ENCODE measurements at regions of chr2 and their contacts with region 1.

Region 1: GRCh38 chr2:173934895-173935294 is 30.3 kb downstream of the SP3 start:
- DNase-seq: no peak
- H3K4me3 ChIP-seq: no peak overlapping the region
- H3K27ac ChIP-seq: no peak overlapping the region
- H3K4me1 ChIP-seq: peaks cover 8% of the 10 kb centered on the region
- H3K27me3 ChIP-seq: no peaks in the 10 kb centered on the region
- CTCF ChIP-seq: no peak

Region 2: GRCh38 chr2:173872711-173873412 is 62.0 kb before region 1 on chr2:
- CTCF ChIA-PET with region 1: no interaction called
- POLR2A ChIA-PET with region 1: no interaction called
- intact Hi-C with region 1: no loop called
- DNase-seq: no peak
- H3K4me3 ChIP-seq: no peak overlapping the region
- H3K27ac ChIP-seq: no peak overlapping the region
- H3K4me1 ChIP-seq: no peaks in the 10 kb centered on the region
- H3K27me3 ChIP-seq: no peaks in the 10 kb centered on the region
- CTCF ChIP-seq: no peak

Region 3: DNA sequence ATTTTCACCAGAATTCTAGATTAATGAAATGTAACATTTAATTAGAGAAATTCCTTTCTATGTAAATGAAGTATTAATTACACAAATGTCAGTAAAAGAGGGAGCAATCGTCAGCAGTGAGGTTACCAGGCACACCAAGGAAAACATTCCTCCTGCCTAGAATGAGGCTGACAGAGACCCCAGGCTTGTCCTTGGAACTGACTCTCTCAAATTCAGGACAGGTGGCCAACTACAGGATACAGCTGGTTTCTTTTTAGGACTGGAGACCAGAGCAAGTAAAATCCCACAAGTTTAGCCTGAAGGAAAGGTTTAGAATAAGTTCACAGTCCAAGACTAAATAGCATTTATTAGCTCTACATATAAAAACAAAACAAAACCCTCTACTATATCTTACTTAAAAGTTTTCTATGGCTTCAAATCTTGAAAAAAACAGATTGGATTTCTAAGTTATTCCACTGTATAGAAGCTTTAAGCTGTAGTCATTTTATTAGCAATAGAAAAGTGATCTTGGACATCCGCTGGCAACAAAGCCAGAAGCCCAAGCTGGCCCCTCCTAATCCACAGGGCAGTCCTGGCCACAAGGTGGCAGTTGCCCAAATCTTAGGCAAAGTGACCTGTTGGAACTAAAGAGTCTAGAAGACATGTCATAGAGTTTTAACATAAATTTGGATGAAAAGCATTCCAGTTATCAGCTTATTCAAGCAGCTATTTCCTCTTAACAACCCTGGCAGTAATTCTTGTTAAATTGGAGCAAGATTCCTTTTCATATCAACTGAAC is 50.7 kb before region 1 on chr2:
- CTCF ChIA-PET with region 1: interaction called, 3 read pairs
- POLR2A ChIA-PET with region 1: interaction called, 16 read pairs
- intact Hi-C with region 1: no loop called
- DNase-seq: peak; percentile 39
- H3K4me3 ChIP-seq: no peak overlapping the region
- H3K27ac ChIP-seq: no peak overlapping the region
- H3K4me1 ChIP-seq: peaks cover 9% of the 10 kb centered on the region
- H3K27me3 ChIP-seq: no peaks in the 10 kb centered on the region
- CTCF ChIP-seq: peak; percentile 51; the same call in 1 of the 2 replicates

Measured in A673 (cell line).